ENCODE measurements at regions of chr12 and their contacts with region 1.

Region 1: GRCh38 chr12:56688129-56688845 is at the start of gene PTGES3:
- DNase-seq: peak; percentile 99
- H3K4me3 ChIP-seq: peak within 1 kb of the TSS; percentile 63 to 97 (median 85)
- H3K27ac ChIP-seq: peak within 1 kb of the TSS; percentile 97 to 100 (median 98)
- H3K4me1 ChIP-seq: peaks cover 0 to 41% (median 33%) of the 10 kb centered on the region in 4 donors
- H3K27me3 ChIP-seq: no peaks in the 10 kb centered on the region
- CTCF ChIP-seq: no peak
- EP300 ChIP-seq: peak in 1 of 4 donors; percentile 93
- POLR2A ChIP-seq: peak; percentile 91 to 95
- total RNA-seq, gene PTGES3: 92.8 to 156 (median 120) TPM

Region 2: DNA sequence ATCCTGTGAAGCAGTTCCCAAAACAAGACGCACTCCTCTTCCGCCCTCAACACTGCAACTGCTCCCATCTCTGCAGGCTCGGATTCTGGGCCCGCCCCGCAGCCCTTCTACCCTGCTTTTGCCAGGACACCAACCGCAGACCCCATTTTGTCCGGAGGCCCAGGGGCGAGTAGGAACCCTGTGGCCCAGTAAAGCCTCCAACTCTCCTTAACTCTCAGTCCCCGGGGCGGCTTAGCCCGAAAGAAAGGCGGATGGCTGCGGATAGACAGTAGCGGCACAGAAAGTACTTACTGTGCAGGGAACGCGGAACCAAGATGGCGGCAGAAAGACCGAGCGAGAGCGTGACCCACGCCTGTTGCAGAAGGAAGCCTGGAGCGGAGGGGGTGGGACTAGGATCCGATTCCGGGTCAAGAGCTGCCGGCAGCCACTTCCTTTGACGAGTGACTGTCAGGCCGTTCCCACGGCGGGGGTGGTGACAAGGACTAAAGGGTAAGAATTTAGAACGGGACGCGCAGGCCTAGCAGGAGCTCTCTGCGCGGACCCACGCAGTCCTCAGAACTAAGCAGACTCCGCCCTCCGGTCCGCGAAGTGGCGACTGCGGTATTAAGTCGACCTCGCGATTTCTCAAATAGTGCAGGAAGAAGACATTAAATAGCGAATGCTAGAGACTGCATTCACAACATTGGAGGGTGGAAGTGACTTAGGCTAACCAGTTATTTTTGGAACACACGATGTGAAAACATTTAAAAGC is 36.9 kb after region 1 on chr12 and contains the start of gene NACA:
- intact Hi-C with region 1: loop called (anchors 1 kb)
- DNase-seq: peak; percentile 99
- H3K4me3 ChIP-seq: peak within 1 kb of the TSS; percentile 59 to 97 (median 68)
- H3K27ac ChIP-seq: peak within 1 kb of the TSS; percentile 88 to 96 (median 90)
- H3K4me1 ChIP-seq: peaks cover 0 to 47% (median 41%) of the 10 kb centered on the region in 4 donors
- H3K27me3 ChIP-seq: no peaks in the 10 kb centered on the region
- CTCF ChIP-seq: no peak
- EP300 ChIP-seq: peak in 2 of 4 donors; percentile 5 to 40
- POLR2A ChIP-seq: peak; percentile 96 to 98
- total RNA-seq, gene NACA: 1,056 to 1,536 (median 1,356) TPM

Measured in sigmoid colon (tissue), 7 donors.